ENCODE measurements at regions of chr9 and their contacts with region 1.

Region 1: GRCh38 chr9:106862825-106863720 is at the start of gene ZNF462:
- DNase-seq: peak; percentile 76
- H3K4me3 ChIP-seq: peak within 1 kb of the TSS; percentile 86 to 99 (median 91)
- H3K27ac ChIP-seq: peak within 1 kb of the TSS; percentile 84
- H3K4me1 ChIP-seq: peaks cover 23% of the 10 kb centered on the region
- H3K27me3 ChIP-seq: no peaks in the 10 kb centered on the region
- CTCF ChIP-seq: peak; percentile 14 to 50
- total RNA-seq, gene ZNF462: 28.0 to 43.9 TPM

Region 2: DNA sequence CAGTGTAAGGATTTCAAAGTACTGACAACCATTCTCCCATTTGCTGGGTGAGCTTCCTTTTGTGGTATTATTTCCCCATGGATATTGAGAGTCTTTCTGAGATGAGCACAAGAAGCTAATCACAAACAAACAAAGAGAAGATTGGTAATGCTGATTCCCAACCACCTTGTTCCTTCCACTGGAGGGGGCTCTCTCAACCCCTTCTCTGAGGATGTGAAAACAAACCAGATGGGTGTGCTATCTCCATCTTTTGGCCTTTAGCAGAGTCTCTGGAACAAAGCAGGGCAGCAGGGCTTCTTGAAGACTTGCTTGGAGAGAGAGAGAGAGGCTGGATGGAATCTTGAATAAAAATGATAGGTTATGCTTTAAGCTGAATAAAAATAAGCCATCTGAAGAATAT is 576.8 kb before region 1 on chr9:
- CTCF ChIA-PET with region 1: no interaction called
- dilution Hi-C with region 1: no loop called
- in situ Hi-C with region 1: no loop called
- intact Hi-C with region 1: loop called (anchors 2 kb)
- DNase-seq: peak; percentile 27
- H3K4me3 ChIP-seq: no peak overlapping the region
- H3K27ac ChIP-seq: no peak overlapping the region
- H3K4me1 ChIP-seq: peaks cover 11% of the 10 kb centered on the region
- H3K27me3 ChIP-seq: no peaks in the 10 kb centered on the region
- CTCF ChIP-seq: peak; percentile 26 to 38

Region 3: GRCh38 chr9:106648799-106649198 is 214.3 kb before region 1 on chr9:
- CTCF ChIA-PET with region 1: no interaction called
- dilution Hi-C with region 1: no loop called
- in situ Hi-C with region 1: no loop called
- intact Hi-C with region 1: loop called (anchors 1 kb)
- DNase-seq: peak; percentile 15
- H3K4me3 ChIP-seq: no peak overlapping the region
- H3K27ac ChIP-seq: no peak overlapping the region
- H3K4me1 ChIP-seq: no peaks in the 10 kb centered on the region
- H3K27me3 ChIP-seq: no peaks in the 10 kb centered on the region
- CTCF ChIP-seq: peak; percentile 40 to 58

Region 4: DNA sequence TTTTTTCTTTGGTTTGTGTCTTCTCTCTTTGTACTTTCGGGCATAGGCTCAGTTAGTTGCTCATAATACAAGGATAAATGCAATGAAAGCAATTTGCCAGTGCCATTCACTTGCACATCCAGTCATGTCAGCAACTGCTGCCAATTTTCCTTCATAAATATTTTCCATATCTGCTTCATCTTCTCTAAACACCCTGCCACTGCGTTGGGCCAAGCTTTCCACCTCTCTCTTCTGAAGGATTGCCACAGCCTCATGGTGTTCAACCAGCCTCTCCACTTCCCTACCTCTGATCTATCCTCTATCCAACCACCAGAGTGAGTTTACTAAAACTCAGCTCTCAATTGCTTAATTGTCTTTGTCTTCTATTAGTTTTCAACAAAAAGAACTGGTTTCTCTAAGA is 192.7 kb before region 1 on chr9:
- CTCF ChIA-PET with region 1: no interaction called
- dilution Hi-C with region 1: no loop called
- in situ Hi-C with region 1: no loop called
- intact Hi-C with region 1: no loop called
- DNase-seq: no peak
- H3K4me3 ChIP-seq: no peak overlapping the region
- H3K27ac ChIP-seq: no peak overlapping the region
- H3K4me1 ChIP-seq: no peaks in the 10 kb centered on the region
- H3K27me3 ChIP-seq: no peaks in the 10 kb centered on the region
- CTCF ChIP-seq: no peak

Region 5: DNA sequence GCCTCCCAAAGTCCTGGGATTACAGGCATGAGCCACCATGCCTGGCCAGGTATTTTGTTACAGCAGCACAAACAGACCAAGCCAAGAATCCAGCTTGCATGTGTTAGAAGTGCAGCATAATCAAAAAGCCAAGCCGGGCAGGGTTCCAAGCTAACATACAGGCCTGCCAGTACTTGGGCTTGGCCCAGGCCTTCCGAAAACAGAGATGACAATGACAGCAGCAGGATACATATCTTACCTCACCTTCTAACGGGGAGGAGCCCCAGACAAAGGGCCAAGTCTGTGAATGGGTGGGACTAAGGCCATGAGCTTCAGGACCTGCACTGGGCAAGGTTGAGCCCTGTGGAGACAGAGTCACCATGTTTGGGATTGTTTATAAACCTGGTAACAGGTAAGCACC is 91.4 kb before region 1 on chr9:
- CTCF ChIA-PET with region 1: no interaction called
- dilution Hi-C with region 1: no loop called
- in situ Hi-C with region 1: no loop called
- intact Hi-C with region 1: loop called (anchors 2 kb)
- DNase-seq: no peak
- H3K4me3 ChIP-seq: no peak overlapping the region
- H3K27ac ChIP-seq: no peak overlapping the region
- H3K4me1 ChIP-seq: peaks cover 14% of the 10 kb centered on the region
- H3K27me3 ChIP-seq: no peaks in the 10 kb centered on the region
- CTCF ChIP-seq: no peak

Region 6: GRCh38 chr9:106931918-106932738 is 69.1 kb after region 1 on chr9:
- CTCF ChIA-PET with region 1: no interaction called
- dilution Hi-C with region 1: no loop called
- in situ Hi-C with region 1: no loop called
- intact Hi-C with region 1: loop called (anchors 2 kb)
- DNase-seq: no peak
- H3K4me3 ChIP-seq: no peak overlapping the region
- H3K27ac ChIP-seq: no peak overlapping the region
- H3K4me1 ChIP-seq: no peaks in the 10 kb centered on the region
- H3K27me3 ChIP-seq: no peaks in the 10 kb centered on the region
- CTCF ChIP-seq: peak in 1 of 2 donors; percentile 8

Region 7: GRCh38 chr9:107137495-107138202 is 274.6 kb after region 1 on chr9:
- CTCF ChIA-PET with region 1: interaction called, 4 read pairs
- dilution Hi-C with region 1: no loop called
- in situ Hi-C with region 1: no loop called
- intact Hi-C with region 1: loop called (anchors 1 kb)
- DNase-seq: no peak
- H3K4me3 ChIP-seq: no peak overlapping the region
- H3K27ac ChIP-seq: no peak overlapping the region
- H3K4me1 ChIP-seq: no peaks in the 10 kb centered on the region
- H3K27me3 ChIP-seq: no peaks in the 10 kb centered on the region
- CTCF ChIP-seq: peak; percentile 67 to 68

Region 8: GRCh38 chr9:108535526-108535925 is 1672.5 kb after region 1 on chr9:
- CTCF ChIA-PET with region 1: interaction called, 18 read pairs
- dilution Hi-C with region 1: no loop called
- in situ Hi-C with region 1: no loop called
- intact Hi-C with region 1: no loop called
- DNase-seq: no peak
- H3K4me3 ChIP-seq: no peak overlapping the region
- H3K27ac ChIP-seq: peak overlapping the region; percentile 91
- H3K4me1 ChIP-seq: peaks cover 29% of the 10 kb centered on the region
- H3K27me3 ChIP-seq: no peaks in the 10 kb centered on the region
- CTCF ChIP-seq: peak; percentile 17 to 25